ENCODE measurements at regions of chr1 and their contacts with region 1.

Region 1: DNA sequence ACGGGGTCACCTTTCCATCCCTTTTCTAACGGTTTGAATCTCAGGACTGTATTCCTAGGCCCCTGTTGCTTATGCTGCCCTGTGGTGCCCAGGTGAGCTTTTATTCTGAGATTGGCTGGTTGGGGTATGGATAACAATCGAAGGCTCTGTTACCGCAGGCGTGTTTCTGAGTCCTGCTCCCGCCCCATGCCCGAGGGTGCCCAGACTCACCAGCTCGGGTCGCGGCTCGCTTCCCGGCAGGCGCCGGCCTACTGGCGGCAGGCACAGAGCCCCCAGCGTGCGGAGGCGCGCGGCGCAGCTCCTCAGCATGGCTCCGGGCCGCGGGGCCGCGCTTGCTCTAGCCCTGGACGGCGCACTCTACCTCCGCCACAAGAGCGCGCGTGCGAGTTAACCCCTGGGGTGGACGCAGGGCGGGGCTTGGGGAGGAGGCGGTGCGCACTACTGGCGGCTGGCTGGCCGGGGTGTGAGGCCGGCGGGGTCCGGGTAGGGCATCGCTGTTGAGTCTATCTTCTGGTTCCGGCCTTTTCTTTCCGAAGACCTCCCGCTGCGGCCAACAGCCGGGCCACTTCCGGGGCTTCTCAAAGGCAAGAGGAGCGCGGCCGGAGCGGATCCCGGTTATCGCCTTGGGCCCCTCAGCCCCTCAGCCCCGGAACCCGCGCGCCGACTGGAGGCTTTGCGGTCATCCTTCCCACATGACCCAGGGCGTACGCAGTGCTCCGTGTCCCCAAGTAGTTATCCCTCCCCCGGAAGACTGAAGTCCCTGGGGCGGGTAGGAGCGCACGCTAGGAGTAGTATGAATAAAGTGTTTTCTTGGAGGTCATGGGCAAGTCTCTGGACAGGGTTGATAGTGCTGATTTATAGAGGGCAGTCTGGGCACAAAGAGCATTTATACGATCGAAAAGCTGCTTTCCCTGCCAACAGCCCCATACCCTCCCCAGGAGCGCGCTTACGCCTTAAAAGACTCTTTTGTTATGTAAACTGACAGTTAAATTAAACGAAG is at the start of gene THEM4:
- DNase-seq: peak; percentile 95
- H3K4me3 Mint-ChIP-seq: peak within 1 kb of the TSS; percentile 82
- H3K27ac Mint-ChIP-seq: peak within 1 kb of the TSS; percentile 73
- H3K4me1 Mint-ChIP-seq: peaks cover 45% of the 10 kb centered on the region
- H3K27me3 Mint-ChIP-seq: peaks cover 4% of the 10 kb centered on the region
- total RNA-seq, gene THEM4: 26.3 to 28.6 TPM

Region 2: DNA sequence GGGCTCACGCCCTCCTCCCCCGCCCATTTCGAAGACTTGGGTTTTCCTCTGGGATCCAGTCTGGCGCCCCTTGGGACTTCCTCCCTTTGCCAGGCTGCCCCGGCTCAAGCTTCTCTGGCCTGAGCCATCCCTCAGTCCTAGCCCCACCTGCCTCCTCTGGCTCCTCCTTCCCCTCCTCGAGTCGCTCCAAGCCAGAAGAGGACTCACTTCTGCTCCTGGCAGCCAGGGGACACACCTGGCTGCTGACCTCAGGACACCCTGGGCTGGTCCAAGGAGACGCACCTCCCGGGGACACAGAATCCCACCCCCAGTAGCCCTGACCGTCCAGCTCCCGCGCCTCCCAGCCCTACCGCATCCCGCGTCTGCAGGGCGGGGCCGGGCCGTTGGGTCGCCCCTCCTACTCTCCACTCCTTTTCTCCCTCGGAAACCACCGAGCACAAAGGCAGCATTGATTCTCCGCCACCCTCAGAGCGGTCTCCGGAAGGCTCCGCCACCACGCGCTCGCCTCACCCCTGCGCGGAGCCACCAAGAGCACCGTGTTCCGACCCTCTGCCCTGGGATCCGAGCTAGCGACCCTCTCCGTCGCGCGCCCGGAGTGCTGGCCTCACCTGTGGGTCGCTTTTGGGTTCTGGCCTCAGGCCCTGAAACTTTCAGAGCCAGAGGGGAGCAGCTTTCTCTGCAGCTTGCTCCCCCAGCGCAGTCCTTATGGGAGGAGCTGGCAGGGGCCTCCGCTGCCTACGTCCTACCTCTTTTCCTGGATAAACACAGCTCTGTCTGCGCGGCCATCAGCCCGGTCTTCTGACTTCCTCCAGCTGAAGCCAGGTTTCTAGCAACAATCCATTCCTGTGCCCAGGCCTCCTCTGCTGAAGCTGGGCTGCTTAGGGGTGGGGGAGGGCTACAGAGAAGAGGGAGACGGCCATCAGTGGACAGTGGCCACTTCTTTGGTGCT is 69.7 kb before region 1 on chr1 and contains the start of gene C2CD4D:
- CTCF ChIA-PET with region 1: no interaction called
- POLR2A ChIA-PET with region 1: interaction called, 16 read pairs
- DNase-seq: peak; percentile 82
- H3K4me3 Mint-ChIP-seq: peak within 1 kb of the TSS; percentile 89
- H3K27ac Mint-ChIP-seq: peak within 1 kb of the TSS; percentile 89
- H3K4me1 Mint-ChIP-seq: peaks cover 64% of the 10 kb centered on the region
- H3K27me3 Mint-ChIP-seq: no peaks in the 10 kb centered on the region
- total RNA-seq, gene C2CD4D: 3.0 to 3.7 TPM

Region 3: GRCh38 chr1:151898513-151898991 is 10.9 kb before region 1 on chr1:
- CTCF ChIA-PET with region 1: interaction called, 39 read pairs
- POLR2A ChIA-PET with region 1: interaction called, 57 read pairs
- DNase-seq: peak; percentile 68
- H3K4me3 Mint-ChIP-seq: peak overlapping the region; percentile 71
- H3K27ac Mint-ChIP-seq: peak overlapping the region; percentile 95
- H3K4me1 Mint-ChIP-seq: peaks cover 58% of the 10 kb centered on the region
- H3K27me3 Mint-ChIP-seq: no peaks in the 10 kb centered on the region

Region 4: GRCh38 chr1:151945725-151946364 is 36.4 kb after region 1 on chr1:
- CTCF ChIA-PET with region 1: interaction called, 4 read pairs
- POLR2A ChIA-PET with region 1: interaction called, 13 read pairs
- DNase-seq: peak; percentile 90
- H3K4me3 Mint-ChIP-seq: peak overlapping the region; percentile 56
- H3K27ac Mint-ChIP-seq: peak overlapping the region; percentile 88
- H3K4me1 Mint-ChIP-seq: peaks cover 41% of the 10 kb centered on the region
- H3K27me3 Mint-ChIP-seq: no peaks in the 10 kb centered on the region

Region 5: GRCh38 chr1:152001391-152002249 is 92.2 kb after region 1 on chr1:
- CTCF ChIA-PET with region 1: interaction called, 18 read pairs
- POLR2A ChIA-PET with region 1: interaction called, 5 read pairs
- DNase-seq: peak; percentile 84
- H3K4me3 Mint-ChIP-seq: no peak overlapping the region
- H3K27ac Mint-ChIP-seq: no peak overlapping the region
- H3K4me1 Mint-ChIP-seq: peaks cover 22% of the 10 kb centered on the region
- H3K27me3 Mint-ChIP-seq: peaks cover 21% of the 10 kb centered on the region